ENCODE measurements at regions of chr11 and their contacts with region 1.

Region 1: DNA sequence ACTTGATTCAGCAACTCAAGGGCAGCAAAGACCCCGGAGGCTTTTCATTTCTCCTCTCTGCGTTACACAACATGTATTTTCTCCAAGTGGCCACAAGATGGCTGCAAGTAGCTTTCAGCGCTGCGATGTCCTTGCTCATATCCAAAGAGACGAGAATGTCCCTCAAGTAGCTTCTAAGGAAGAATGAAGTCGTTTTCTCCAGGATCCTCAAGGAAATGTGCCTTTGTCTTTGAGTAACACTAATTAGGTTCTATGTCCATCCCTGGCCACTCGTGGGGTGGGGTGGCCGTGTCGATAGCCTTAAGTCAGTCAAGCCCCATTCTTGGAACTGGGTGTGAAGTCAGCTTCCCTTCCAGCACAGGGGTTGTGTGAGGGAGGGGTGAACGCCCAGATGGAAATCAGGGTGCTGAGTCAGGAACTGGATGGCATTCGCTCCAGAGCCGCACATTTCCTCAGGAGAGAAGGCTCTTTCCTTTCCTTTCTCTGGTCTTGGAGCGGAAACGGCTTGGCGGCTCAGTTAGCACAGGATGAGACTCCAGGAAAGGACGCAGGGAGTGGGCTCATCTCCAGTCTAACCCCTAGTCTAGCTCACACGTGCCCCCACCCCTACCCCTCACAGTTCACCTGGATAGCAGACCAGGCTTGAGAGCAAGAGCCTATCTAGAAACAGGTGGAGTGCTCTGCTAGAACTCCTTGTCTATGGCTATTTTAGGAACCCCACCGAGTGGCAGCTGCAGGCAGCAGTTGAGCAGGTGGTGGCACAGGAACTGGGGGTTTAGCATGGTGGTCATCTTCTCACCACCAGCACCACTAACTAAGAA is 44.3 kb downstream of the NNMT start:
- DNase-seq: peak; percentile 6 to 76 (median 49)

Region 2: DNA sequence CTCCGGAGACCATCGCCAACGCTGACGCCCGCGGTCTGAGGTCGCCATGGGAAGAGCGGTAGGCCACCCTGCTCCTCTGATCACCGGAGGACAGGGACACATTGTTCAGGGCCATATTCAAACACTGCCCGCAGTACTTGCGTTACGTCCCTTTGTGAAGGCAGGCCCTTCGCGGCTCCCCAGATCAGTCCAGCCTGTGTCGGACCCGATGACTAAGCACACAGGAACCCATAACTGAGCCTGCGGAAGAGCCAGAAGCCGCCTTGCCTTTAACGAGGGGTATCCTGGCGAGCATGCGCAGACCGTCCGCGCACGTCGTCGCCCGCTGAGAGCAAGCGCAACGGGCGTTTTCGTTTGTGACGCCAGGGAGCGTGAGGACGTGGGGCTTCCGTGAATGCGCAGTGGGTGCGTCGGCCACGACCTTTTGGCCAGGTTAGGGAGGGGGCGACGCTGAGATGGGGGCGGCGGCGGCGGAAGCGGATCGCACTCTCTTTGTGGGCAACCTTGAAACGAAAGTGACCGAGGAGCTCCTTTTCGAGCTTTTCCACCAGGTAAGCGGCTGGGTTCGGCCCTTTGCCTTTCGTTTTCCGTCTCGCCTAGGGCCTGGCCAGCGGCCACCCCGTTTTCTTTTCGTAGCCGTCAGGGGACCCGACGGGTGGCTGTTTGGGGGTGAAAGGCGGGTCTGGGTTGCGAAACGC is 59.8 kb after region 1 on chr11 and contains the starts of genes C11orf71 and RBM7:
- intact Hi-C with region 1: loop called (anchors 10 kb)
- DNase-seq: peak; percentile 91 to 99 (median 96)

Measured in head of caudate nucleus (tissue), 42 donors.